PC-9 (cell line): ENCODE measurements at regions of chr2 and their contacts with region 1.

Region 1: GRCh38 chr2:74223941-74224770 is 25.7 kb downstream of the MTHFD2 start:
- DNase-seq: no peak
- H3K4me3 ChIP-seq: no peak overlapping the region
- H3K27ac ChIP-seq: no peak overlapping the region
- H3K4me1 ChIP-seq: no peaks in the 10 kb centered on the region
- H3K27me3 ChIP-seq: no peaks in the 10 kb centered on the region
- CTCF ChIP-seq: no peak

Region 2: DNA sequence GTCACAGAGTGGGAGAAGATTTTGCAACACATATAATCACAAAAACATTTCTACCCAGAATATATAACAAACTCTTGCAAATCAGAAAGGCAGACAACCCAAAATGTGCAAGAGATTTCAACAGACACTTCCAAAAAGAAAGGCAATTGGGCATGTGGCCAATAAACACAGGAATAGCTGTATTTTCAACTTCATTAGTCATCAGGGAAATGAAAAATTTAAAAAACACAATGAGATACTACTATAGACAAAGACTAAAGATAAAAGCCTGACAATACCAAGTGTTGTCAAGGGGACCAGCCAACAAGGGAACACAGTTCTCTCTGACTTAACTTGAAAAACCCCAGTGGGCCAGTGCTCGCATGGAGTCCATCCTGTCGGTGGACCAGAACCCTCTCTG is 14.7 kb after region 1 on chr2:
- CTCF ChIA-PET with region 1: no interaction called
- POLR2A ChIA-PET with region 1: interaction called, 10 read pairs
- intact Hi-C with region 1: no loop called
- DNase-seq: no peak
- H3K4me3 ChIP-seq: no peak overlapping the region
- H3K27ac ChIP-seq: no peak overlapping the region
- H3K4me1 ChIP-seq: peaks cover 7% of the 10 kb centered on the region; the same call in 1 of the 2 replicates
- H3K27me3 ChIP-seq: no peaks in the 10 kb centered on the region
- CTCF ChIP-seq: no peak

Region 3: DNA sequence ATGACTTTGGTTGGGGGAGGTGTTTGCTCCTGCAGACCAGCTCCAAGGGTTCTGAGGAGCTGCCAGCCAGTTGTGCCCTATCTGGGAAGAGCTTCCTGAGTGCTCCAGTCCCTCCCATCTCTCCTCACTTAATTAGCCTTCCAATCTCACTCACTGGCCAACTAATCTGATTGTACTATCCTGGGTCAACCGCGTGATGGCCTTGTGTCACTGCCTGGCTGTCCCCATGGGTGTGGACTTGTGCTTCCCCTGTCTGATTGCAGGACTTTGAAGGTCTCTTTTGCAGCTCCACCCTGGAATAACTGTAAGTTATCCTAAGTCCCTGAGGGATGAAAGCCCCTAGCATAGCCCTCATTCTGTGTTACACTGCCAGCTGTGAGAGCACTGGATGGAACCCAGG is 54.0 kb after region 1 on chr2:
- CTCF ChIA-PET with region 1: no interaction called
- POLR2A ChIA-PET with region 1: interaction called, 10 read pairs
- intact Hi-C with region 1: no loop called
- DNase-seq: no peak
- H3K4me3 ChIP-seq: no peak overlapping the region
- H3K27ac ChIP-seq: no peak overlapping the region
- H3K4me1 ChIP-seq: no peaks in the 10 kb centered on the region
- H3K27me3 ChIP-seq: peaks cover 69% of the 10 kb centered on the region
- CTCF ChIP-seq: no peak